Natural killer cell (primary cell): ENCODE measurements at regions of chr17 and their contacts with region 1.

Region 1: DNA sequence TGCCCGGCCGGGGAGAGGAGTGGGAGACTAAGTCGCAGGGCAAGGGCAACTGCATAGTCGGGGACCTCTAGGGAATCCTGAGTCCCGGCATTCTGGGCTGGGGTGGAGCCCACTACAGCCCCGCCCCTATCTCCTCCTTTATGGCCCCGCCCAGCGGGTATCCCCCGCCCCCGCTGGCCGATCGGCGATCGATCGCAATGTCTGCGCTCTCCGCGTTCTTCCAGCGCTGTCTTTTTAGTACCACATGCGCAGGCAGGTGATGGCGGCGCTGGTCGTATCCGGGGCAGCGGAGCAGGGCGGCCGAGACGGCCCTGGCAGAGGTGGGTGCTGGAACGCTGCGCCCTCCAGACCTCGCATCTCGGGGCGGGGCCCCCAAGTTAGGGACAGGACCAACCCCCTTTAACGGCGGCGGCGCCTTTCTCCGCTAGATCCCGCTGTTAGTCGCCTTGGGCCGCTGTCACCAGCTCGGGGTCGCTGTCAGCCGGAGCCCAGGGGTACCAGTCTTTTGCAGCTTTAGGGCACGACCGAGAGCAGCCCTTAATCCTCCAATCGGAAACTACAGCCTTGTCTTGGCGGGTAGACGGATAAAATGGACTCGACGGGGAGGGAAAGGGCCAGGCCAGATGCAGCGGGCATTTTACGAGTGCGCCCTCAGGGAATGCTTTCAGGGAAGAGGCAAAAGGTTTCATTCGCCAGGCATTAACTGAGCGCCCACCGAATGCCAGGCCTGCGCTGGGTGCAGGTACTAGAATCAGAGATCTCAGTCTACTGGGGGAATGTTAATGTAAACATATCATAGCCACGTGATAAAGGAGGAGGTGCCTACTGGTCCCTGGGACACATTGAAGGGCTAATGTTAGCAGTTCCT is at the start of gene DPH1:
- DNase-seq: peak; percentile 76 to 91
- ATAC-seq: peak; percentile 88 to 95 (median 89)
- H3K4me3 ChIP-seq: peak within 1 kb of the TSS; percentile 94
- H3K4me3 Mint-ChIP-seq: peak within 1 kb of the TSS; percentile 92
- H3K27ac ChIP-seq: peak within 1 kb of the TSS; percentile 59
- H3K27ac Mint-ChIP-seq: peak within 1 kb of the TSS; percentile 79 to 83
- H3K4me1 ChIP-seq: peaks cover 31% of the 10 kb centered on the region
- H3K4me1 Mint-ChIP-seq: peaks cover 19 to 29% of the 10 kb centered on the region in 2 donors
- H3K27me3 ChIP-seq: peaks cover 8% of the 10 kb centered on the region
- H3K27me3 Mint-ChIP-seq: peaks cover 23 to 32% of the 10 kb centered on the region in 2 donors
- CTCF ChIP-seq: no peak
- total RNA-seq, gene DPH1: 60.2 to 65.2 (median 63.2) TPM

Region 2: GRCh38 chr17:1908699-1909309 is 121.3 kb before region 1 on chr17:
- intact Hi-C with region 1: loop called (anchors 10 kb)
- DNase-seq: peak in 1 of 2 donors; percentile 53
- ATAC-seq: peak in 1 of 3 donors; percentile 28
- H3K4me3 ChIP-seq: no peak overlapping the region
- H3K4me3 Mint-ChIP-seq: peak overlapping the region; percentile 13
- H3K27ac ChIP-seq: no peak overlapping the region
- H3K27ac Mint-ChIP-seq: no peak overlapping the region
- H3K4me1 ChIP-seq: peaks cover 12% of the 10 kb centered on the region
- H3K4me1 Mint-ChIP-seq: peaks cover 0 to 4% of the 10 kb centered on the region in 2 donors
- H3K27me3 ChIP-seq: peaks cover 40% of the 10 kb centered on the region
- H3K27me3 Mint-ChIP-seq: peaks cover 43 to 52% of the 10 kb centered on the region in 2 donors
- CTCF ChIP-seq: no peak

Region 3: DNA sequence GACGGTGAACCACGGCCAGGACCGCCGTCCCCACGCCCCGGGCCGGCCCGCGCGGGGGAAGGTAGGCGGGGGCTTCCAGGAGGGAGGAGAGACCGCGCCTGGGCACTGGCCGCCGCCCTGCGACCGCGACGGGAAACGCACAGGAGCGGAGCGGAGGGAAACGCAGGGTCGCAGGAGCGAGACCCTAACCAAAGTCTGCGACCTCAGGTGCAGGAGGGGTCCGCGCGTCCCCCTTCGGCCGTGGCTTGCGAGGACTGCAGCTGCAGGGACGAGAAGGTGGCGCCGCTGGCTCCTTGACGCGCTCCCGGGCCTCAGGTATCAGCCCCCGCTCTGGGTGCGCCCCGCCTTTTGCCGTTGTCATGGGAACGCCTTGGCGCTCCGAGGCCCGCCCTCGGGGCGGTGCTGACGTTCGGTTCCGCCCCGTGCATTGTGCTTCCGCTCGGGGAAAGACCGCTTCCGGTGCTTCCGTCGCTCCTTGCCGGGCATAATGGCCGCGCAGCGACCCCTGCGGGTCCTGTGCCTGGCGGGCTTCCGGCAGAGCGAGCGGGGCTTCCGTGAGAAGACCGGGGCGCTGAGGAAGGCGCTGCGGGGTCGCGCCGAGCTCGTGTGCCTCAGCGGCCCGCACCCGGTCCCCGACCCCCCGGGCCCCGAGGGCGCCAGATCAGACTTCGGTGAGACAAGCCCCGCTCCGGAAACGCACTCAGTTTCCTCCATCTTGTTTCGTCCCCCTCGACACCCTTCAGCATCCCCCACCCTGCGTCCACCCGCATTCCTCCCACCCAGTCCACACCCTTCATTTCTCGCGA is 11.6 kb after region 1 on chr17 and contains the start of gene OVCA2:
- intact Hi-C with region 1: loop called (anchors 1 kb)
- DNase-seq: peak; percentile 94 to 99
- ATAC-seq: peak; percentile 93 to 95 (median 95)
- H3K4me3 ChIP-seq: peak within 1 kb of the TSS; percentile 71
- H3K4me3 Mint-ChIP-seq: peak within 1 kb of the TSS; percentile 92
- H3K27ac ChIP-seq: peak within 1 kb of the TSS; percentile 85
- H3K27ac Mint-ChIP-seq: peak within 1 kb of the TSS; percentile 89 to 98
- H3K4me1 ChIP-seq: peaks cover 22% of the 10 kb centered on the region
- H3K4me1 Mint-ChIP-seq: peaks cover 17 to 18% of the 10 kb centered on the region in 2 donors
- H3K27me3 ChIP-seq: no peaks in the 10 kb centered on the region
- H3K27me3 Mint-ChIP-seq: no peaks in the 10 kb centered on the region
- CTCF ChIP-seq: peak; percentile 54
- total RNA-seq, gene OVCA2: 27.9 to 33.8 (median 28.5) TPM